ENCODE measurements at regions of chr7 and their contacts with region 1.

Region 1: GRCh38 chr7:151795168-151795811 is 81.6 kb downstream of the PRKAG2 start:
- DNase-seq: no peak
- ATAC-seq: no peak
- H3K4me3 ChIP-seq: no peak overlapping the region
- H3K27ac ChIP-seq: peak overlapping the region in 1 of 2 experiments; percentile 11; a peak in 1 of 6 replicates
- H3K4me1 ChIP-seq: peaks cover 25% of the 10 kb centered on the region
- CTCF ChIP-seq: no peak
- EP300 ChIP-seq: no peak
- POLR2A ChIP-seq: no peak
- RAD21 ChIP-seq: no peak

Region 2: DNA sequence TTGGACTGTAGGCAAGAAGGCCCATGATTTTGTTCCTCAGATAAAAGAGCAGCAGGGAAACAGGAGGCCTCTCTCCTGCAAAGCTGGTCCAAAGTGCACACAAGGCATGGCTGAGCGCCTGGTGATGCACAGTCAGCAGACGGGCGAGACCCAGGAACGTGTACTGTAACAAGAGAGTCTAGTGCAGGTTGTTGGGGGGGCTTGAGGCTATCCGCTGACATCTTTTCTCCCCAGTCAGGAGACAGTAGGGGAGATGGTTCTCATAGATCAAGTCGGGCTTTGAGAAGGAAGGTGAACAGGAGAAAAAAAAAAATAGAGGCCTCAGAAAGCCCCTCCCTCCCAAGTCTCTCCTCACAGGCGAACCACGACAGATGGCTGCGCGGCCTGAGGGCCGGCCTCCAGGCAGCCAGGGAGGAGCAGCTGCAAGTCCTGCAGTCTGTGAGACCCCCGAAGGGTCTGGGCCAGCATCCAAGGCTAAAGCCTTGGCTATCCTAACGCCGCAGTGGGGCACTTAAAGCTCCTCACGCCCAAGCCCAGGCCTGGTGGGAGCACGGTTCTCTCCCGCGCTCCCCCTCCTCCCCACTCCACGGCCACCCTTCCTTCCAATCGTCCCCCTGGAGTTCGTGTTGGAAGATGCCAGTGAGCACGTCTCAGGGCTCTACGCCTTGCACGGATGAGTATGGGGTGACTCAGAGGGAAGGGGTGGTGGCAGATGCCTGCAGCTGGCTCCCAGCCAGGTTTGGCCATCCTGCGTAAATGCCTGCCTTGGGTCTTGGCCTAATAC is 13.3 kb after region 1 on chr7:
- CTCF ChIA-PET with region 1: interaction called, 17 read pairs
- POLR2A ChIA-PET with region 1: no interaction called
- DNase-seq: peak; percentile 76 to 87
- ATAC-seq: peak; percentile 89 to 92
- H3K4me3 ChIP-seq: no peak overlapping the region
- H3K27ac ChIP-seq: peak overlapping the region; percentile 60 to 86; a peak in 5 of 6 replicates
- H3K4me1 ChIP-seq: peaks cover 21% of the 10 kb centered on the region
- CTCF ChIP-seq: no peak
- EP300 ChIP-seq: no peak
- POLR2A ChIP-seq: no peak
- RAD21 ChIP-seq: no peak

Region 3: GRCh38 chr7:151968357-151968756 is 173.1 kb after region 1 on chr7:
- CTCF ChIA-PET with region 1: no interaction called
- POLR2A ChIA-PET with region 1: no interaction called
- DNase-seq: no peak
- ATAC-seq: no peak
- H3K4me3 ChIP-seq: no peak overlapping the region
- H3K27ac ChIP-seq: no peak overlapping the region
- H3K4me1 ChIP-seq: no peaks in the 10 kb centered on the region
- CTCF ChIP-seq: no peak
- EP300 ChIP-seq: no peak
- POLR2A ChIP-seq: no peak
- RAD21 ChIP-seq: no peak